Thyroid gland (tissue), 4 donors: ENCODE measurements at regions of chr5 and their contacts with region 1.

Region 1: GRCh38 chr5:135185481-135186065 is 151.5 kb upstream of the PITX1 start:
- DNase-seq: peak; percentile 86 to 89
- H3K4me3 ChIP-seq: no peak overlapping the region
- H3K27ac ChIP-seq: no peak overlapping the region
- H3K4me1 ChIP-seq: peaks cover 4 to 8% of the 10 kb centered on the region in 2 donors
- H3K27me3 ChIP-seq: no peaks in the 10 kb centered on the region
- CTCF ChIP-seq: no peak
- POLR2A ChIP-seq: no peak

Region 2: DNA sequence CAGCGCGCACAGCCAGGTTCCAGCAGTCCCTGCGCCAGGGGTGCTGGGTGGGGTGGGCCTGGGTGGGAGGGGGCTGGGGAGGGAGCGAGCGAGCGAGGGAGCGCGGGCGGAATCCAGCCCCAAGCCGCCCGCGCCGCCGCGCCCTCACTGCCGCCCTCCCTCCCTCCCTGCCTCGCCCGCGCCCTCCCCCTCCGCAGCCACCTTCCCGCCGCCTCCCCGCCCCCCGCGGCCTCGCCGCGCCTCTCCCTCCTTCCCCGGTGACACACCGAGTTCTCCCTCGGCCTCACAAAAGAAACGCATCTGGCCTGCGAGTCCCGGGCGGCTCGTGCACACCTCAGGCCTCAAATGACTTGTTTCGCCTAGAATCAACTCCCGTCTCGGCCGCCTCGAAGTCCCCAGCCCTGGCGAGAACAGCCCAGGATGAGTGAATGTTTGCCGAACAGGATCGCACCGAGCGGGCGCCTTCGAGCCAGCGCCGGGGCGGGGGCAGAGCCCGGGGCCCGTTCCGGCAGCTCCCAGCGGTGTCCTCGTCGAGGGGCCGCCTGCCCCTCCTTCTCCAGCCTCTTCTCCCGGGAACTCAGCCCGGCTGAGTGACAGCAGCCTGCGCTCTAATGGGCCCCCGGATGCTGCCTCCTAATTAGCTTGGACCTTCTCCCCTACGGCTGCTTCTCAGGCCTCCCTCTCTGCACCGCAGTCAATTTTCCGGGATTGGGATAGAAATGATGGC is 151.2 kb before region 1 on chr5:
- intact Hi-C with region 1: loop called (anchors 10 kb)
- DNase-seq: peak; percentile 27 to 33
- H3K4me3 ChIP-seq: peak overlapping the region in 1 of 3 donors; percentile 33
- H3K27ac ChIP-seq: no peak overlapping the region
- H3K4me1 ChIP-seq: peaks cover 32 to 39% of the 10 kb centered on the region in 2 donors
- H3K27me3 ChIP-seq: peaks cover 82% of the 10 kb centered on the region
- CTCF ChIP-seq: no peak
- POLR2A ChIP-seq: no peak